ENCODE measurements at regions of chr4 and their contacts with region 1.

Region 1: DNA sequence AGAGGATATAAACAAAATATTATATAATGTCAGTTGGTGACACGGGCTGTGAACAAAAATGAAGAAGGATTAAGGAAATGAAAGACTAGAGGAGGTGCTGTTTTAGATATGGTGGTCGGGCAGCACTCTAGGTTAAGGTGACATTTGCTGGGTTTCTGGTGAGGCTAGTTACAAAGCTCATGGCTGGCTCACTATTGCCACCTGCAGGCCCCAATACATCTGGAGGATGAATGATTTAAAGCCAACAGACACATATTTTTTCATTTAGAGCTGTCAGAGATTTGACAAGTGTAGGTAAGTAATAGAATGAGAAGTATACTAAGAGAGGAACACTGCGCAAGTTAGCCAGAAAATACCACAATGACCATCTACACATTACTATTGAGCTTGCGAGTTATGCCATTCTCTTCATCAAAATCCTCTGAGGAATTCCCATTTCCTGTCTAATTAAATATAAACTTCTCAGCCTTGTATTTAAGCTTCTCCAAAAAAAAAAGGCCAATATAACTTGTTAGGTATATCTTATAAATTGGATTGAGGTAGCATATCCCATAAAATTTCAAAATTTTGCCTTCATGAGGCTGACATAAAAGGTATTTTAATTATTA is 6.4 kb upstream of the FGG start:
- DNase-seq: peak in 2 of 3 donors; percentile 34 to 68
- ATAC-seq: peak in 1 of 2 donors; percentile 40
- H3K4me3 ChIP-seq: no peak overlapping the region
- H3K27ac ChIP-seq: no peak overlapping the region
- H3K4me1 ChIP-seq: no peaks in the 10 kb centered on the region
- H3K27me3 ChIP-seq: no peaks in the 10 kb centered on the region

Region 2: GRCh38 chr4:154559494-154560418 is 59.1 kb before region 1 on chr4:
- intact Hi-C with region 1: loop called in 3 of 4 experiments (anchors 5 to 10 kb)
- DNase-seq: no peak
- ATAC-seq: no peak
- H3K4me3 ChIP-seq: no peak overlapping the region
- H3K27ac ChIP-seq: no peak overlapping the region
- H3K4me1 ChIP-seq: no peaks in the 10 kb centered on the region
- H3K27me3 ChIP-seq: no peaks in the 10 kb centered on the region

Region 3: GRCh38 chr4:154720123-154720522 is 101.3 kb after region 1 on chr4:
- intact Hi-C with region 1: no loop called
- DNase-seq: no peak
- ATAC-seq: no peak
- H3K4me3 ChIP-seq: no peak overlapping the region
- H3K27ac ChIP-seq: no peak overlapping the region
- H3K4me1 ChIP-seq: no peaks in the 10 kb centered on the region
- H3K27me3 ChIP-seq: no peaks in the 10 kb centered on the region

Region 4: GRCh38 chr4:154743683-154744340 is 125.0 kb after region 1 on chr4 and contains the start of gene LRAT:
- intact Hi-C with region 1: no loop called
- DNase-seq: peak; percentile 35 to 78 (median 76)
- ATAC-seq: peak; percentile 79 to 81
- H3K4me3 ChIP-seq: peak within 1 kb of the TSS; percentile 44
- H3K27ac ChIP-seq: no peak within 1 kb of the TSS
- H3K4me1 ChIP-seq: no peaks in the 10 kb centered on the region
- H3K27me3 ChIP-seq: peaks cover 2% of the 10 kb centered on the region
- total RNA-seq, gene LRAT: 0.06 TPM in 1 of 4 donors, not detected in the others

Measured in right cardiac atrium (tissue), 5 donors.